ENCODE measurements at regions of chr16 and their contacts with region 1.

Region 1: GRCh38 chr16:60731329-60732050 is 1304.7 kb downstream of the CDH8 start:
- DNase-seq: no peak
- H3K4me3 ChIP-seq: no peak overlapping the region
- H3K27ac ChIP-seq: no peak overlapping the region
- H3K4me1 ChIP-seq: no peaks in the 10 kb centered on the region
- H3K27me3 ChIP-seq: no peaks in the 10 kb centered on the region
- CTCF ChIP-seq: no peak
- POLR2A ChIP-seq: no peak

Region 2: DNA sequence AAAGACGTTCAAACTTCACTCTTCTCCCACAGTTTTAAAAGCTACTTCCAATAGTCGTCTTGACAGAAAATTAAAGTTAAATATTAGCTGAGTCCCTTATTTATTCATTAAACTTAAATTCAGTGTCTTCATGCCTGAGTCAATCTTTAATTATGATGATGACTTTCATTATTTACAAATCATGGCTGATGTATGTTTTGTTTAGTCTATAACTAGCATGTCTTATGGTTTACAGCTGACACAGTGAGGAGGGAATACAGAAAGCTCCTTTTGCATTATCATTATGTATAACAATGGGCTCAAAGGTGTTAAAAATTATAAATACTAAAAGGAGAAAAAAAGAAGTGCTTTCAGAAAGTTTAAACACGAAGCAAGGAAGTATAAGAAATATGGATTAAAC is 28.4 kb before region 1 on chr16:
- intact Hi-C with region 1: loop called (anchors 2 kb)
- DNase-seq: no peak
- H3K4me3 ChIP-seq: no peak overlapping the region
- H3K27ac ChIP-seq: no peak overlapping the region
- H3K4me1 ChIP-seq: no peaks in the 10 kb centered on the region
- H3K27me3 ChIP-seq: no peaks in the 10 kb centered on the region
- CTCF ChIP-seq: no peak
- POLR2A ChIP-seq: no peak

Region 3: GRCh38 chr16:60755907-60756306 is 24.4 kb after region 1 on chr16:
- intact Hi-C with region 1: no loop called
- DNase-seq: no peak
- H3K4me3 ChIP-seq: no peak overlapping the region
- H3K27ac ChIP-seq: no peak overlapping the region
- H3K4me1 ChIP-seq: no peaks in the 10 kb centered on the region
- H3K27me3 ChIP-seq: no peaks in the 10 kb centered on the region
- CTCF ChIP-seq: no peak
- POLR2A ChIP-seq: no peak